ENCODE measurements at regions of chr17 and their contacts with region 1.

Region 1: GRCh38 chr17:38410201-38410600 is 18.1 kb upstream of the ARHGAP23 start:
- DNase-seq: no peak

Region 2: GRCh38 chr17:38322091-38322779 is 88.0 kb before region 1 on chr17:
- intact Hi-C with region 1: no loop called
- DNase-seq: peak in 41 of 42 donors; percentile 37 to 89 (median 75)

Region 3: DNA sequence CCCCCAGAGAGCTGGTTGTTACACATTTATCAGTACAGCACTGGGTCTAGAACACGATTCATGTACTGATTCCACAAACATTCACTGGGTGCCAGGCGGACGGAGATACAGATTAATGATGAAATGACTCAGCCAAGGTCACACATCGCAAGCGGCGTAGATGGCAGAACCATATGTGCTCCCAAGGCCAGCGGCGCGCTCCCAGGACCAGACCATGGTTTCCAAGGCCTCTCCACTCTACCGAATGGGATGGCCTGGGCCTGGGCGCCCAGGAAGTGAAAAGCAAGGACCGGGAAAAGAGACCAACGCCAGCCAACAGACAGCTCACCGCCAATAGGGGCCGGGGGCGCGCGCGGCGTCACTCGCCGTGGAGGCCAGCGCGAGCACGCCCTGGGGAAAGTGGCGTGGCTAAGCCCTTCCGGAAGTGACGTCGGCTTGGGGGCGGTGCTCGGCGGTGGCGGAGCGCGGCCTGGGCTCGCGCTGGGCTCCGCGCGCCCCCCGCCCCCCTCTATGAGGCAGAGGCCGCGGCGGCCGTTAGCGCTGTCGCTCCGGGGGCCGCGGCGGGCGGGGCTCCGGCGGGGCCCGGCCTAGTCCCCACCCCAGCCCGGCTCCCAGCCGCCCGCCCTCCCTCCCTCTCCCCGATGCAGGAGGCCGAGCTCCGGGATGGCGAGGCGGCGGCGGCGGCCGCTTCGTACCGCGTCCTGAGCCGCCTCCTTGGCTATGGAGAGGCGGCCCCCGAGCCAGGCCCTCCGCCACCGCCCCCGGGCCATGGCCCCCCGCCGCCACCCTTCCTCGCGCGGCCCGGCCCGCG is 58.6 kb before region 1 on chr17 and contains the start of gene SOCS7:
- intact Hi-C with region 1: loop called (anchors 5 kb)
- DNase-seq: peak; percentile 76 to 98 (median 94)

Region 4: DNA sequence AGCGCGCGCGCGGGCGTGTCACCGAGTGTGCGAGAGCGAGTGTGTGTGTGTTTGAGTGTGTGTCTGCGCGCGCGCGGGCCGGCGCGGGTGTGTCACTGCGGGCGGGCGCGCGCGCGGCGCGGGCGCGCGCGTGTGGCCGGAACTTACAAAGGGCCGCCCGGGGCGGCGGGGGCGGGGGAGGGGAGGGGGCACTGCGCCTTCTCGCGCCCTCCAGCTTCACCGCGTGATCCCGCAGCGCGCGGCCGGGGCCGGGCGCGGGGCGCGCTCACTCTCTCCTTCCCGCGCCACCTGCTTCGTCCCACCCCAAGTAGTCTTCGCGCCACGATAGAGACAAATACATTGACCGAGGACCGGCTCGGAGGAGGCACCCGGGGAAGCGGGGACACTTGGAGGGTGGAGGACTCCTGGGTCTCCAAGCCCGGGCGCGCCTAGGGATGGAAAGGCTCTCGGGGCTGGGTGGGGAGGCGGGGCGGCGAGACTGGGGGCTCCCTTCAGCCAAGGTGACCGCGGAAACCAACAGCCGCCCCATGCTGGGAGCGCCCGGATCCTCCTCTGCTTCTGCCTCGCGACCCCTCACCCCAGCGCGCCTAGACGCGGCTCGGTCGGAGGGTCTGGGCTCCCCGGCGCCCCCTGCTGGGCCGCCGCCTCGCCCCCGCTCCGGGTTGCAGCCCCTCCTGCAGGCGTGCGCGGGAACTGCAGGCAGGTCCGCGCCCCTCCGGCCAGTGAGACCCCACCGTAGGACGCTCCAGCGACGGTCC is 195.9 kb after region 1 on chr17 and contains the start of gene SRCIN1:
- intact Hi-C with region 1: no loop called
- DNase-seq: peak; percentile 57 to 90 (median 78)

Measured in head of caudate nucleus (tissue), 42 donors.